ENCODE measurements at regions of chr4 and their contacts with region 1.

Region 1: DNA sequence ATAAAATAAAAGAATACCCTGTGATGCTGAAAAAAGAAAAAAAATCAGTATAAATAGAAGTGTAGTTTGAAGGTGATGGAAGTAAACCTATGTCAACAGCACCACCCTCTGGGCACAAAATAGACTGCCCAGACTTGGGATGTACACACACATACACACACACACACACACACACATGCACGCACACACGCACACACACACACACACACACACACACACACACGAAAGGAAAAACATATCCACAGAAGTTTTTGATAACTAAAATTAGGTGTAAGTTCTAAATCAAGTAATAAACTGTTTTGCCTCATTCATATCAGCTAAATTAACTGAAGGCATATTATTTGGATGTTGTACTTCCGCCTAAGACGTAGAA is 40.5 kb downstream of the ANXA5 start:
- DNase-seq: peak; percentile 56
- H3K4me3 Mint-ChIP-seq: no peak overlapping the region
- H3K27ac Mint-ChIP-seq: no peak overlapping the region
- H3K4me1 Mint-ChIP-seq: no peaks in the 10 kb centered on the region
- H3K27me3 Mint-ChIP-seq: peaks cover 6% of the 10 kb centered on the region

Region 2: DNA sequence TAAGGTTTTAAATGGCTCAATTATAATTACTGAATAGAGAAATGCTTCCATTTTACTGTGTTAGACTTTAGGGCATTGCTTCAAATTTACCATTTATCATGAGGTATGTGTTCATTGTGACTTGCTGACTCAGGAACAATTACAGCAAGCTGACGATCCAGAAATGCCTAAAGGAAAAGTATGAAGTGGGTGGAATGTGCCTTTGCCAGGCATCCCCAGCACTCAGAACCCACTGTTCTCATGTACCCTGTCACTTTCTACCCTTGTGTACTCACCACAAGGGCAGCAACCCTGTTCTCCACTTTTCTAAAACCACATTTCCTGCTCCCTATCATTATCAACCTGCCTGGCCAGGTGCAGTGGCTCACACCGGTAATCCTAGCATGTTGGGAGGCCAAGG is 316.9 kb before region 1 on chr4:
- CTCF ChIA-PET with region 1: no interaction called
- intact Hi-C with region 1: no loop called
- DNase-seq: no peak
- H3K4me3 Mint-ChIP-seq: no peak overlapping the region
- H3K27ac Mint-ChIP-seq: no peak overlapping the region
- H3K4me1 Mint-ChIP-seq: peaks cover 2% of the 10 kb centered on the region
- H3K27me3 Mint-ChIP-seq: peaks cover 3% of the 10 kb centered on the region

Region 3: GRCh38 chr4:121462660-121463261 is 193.5 kb before region 1 on chr4:
- CTCF ChIA-PET with region 1: interaction called, 9 read pairs
- intact Hi-C with region 1: loop called (anchors 2 kb)
- DNase-seq: peak; percentile 69
- H3K4me3 Mint-ChIP-seq: no peak overlapping the region
- H3K27ac Mint-ChIP-seq: no peak overlapping the region
- H3K4me1 Mint-ChIP-seq: no peaks in the 10 kb centered on the region
- H3K27me3 Mint-ChIP-seq: peaks cover 20% of the 10 kb centered on the region

Region 4: DNA sequence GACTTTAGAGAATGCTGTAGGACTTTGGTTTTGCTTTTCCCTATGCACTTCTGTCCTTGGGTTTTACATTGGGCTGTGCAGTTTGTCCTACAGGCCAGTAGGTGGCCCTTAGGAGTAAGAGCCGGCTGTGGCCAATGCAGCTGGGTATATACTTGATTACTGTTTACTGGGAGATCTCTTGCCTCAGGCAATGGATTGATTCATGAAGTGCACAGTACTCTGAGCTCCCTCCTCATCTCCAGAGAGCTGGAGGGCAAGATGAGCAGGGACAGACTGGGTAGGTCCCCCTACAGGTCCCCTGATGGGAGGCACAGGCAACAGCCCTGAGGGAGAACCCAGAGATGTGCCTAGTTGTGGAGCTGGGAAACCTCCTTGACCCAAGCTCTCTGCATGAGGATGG is 171.6 kb before region 1 on chr4:
- CTCF ChIA-PET with region 1: no interaction called
- intact Hi-C with region 1: loop called (anchors 1 kb)
- DNase-seq: peak; percentile 28
- H3K4me3 Mint-ChIP-seq: no peak overlapping the region
- H3K27ac Mint-ChIP-seq: no peak overlapping the region
- H3K4me1 Mint-ChIP-seq: no peaks in the 10 kb centered on the region
- H3K27me3 Mint-ChIP-seq: peaks cover 17% of the 10 kb centered on the region

Region 5: GRCh38 chr4:121842862-121843261 is 186.6 kb after region 1 on chr4:
- CTCF ChIA-PET with region 1: no interaction called
- intact Hi-C with region 1: no loop called
- DNase-seq: no peak
- H3K4me3 Mint-ChIP-seq: no peak overlapping the region
- H3K27ac Mint-ChIP-seq: no peak overlapping the region
- H3K4me1 Mint-ChIP-seq: no peaks in the 10 kb centered on the region
- H3K27me3 Mint-ChIP-seq: no peaks in the 10 kb centered on the region